Heart right ventricle (tissue), 16 donors: ENCODE measurements at regions of chr22 and their contacts with region 1.

Region 1: DNA sequence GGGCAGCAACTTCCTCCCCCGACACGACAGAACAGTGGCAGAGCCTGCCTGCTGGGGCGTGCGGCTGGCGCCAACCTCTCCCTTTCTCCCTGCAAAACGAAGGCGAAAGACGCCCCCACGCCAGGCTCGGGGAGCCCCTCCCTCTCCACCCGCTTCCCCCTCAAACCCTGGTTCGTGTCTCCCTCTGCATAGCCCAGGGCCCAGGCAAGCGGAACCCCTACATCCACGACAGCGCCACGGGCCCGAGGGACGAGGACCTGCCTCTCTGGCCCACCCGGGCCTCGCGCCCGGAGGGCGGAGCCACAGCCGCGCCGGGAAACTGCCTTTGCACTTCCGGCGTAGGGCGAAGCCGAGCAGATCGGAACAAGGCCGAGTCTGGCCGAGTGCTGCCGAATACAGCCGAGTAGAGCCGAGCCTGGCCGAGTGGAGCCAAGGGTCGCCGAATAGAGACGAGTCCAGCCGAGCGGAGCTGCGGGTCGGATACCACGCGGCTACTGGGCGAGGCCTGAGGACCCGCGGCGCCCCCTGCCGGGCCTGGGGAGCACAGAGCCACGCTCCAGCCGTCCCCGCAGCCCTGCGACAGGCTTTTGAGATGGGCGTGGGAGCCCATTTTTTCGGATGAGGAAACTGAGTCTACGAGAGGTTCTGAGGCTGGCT is 11.2 kb upstream of the C1QTNF6 start:
- DNase-seq: peak; percentile 98 to 100
- ATAC-seq: peak; percentile 92 to 96 (median 94)
- H3K4me3 ChIP-seq: peak overlapping the region; percentile 18 to 69 (median 63)
- H3K27ac ChIP-seq: peak overlapping the region; percentile 90 to 97 (median 96)
- H3K4me1 ChIP-seq: peaks cover 24 to 42% (median 39%) of the 10 kb centered on the region in 9 donors
- H3K27me3 ChIP-seq: no peaks in the 10 kb centered on the region
- CTCF ChIP-seq: peak; percentile 85 to 99 (median 97)

Region 2: DNA sequence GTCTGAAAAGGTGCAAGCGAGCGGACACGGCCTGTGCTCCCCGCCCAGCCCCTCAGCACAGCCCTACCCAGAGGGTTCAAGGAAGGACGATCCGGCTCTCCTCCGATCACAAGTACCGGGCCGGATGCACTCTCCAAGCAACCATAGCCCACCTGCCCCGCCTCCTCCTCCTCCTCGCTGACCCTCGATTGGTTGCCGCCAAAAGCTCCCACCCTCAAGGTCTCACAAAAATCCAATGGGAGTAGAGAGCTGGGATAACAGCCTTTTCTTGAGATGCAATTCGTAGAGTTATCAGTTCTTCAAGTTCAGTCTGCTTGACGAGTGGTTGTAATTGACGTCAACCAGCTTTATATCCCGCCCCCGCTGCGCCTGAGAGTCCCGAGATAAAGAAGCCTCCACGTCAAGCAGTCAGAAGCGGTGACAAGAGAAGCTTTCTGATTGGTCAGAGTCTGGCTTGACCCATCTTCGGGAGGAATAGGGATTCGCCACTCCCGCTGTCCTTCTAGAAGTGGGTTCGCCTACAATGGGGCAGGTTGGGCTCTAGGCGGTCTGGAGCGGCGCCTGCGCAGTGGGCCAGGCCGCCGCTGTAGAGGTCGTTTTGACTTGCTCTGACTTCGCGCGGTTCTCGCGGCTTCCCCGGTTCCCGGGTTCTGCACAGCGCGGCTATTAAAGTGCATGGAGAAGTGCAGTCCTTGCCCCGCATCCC is 423.1 kb before region 1 on chr22 and contains the start of gene IFT27:
- intact Hi-C with region 1: loop called in 1 of 10 experiments (anchors 2 kb)
- DNase-seq: peak; percentile 93 to 100
- ATAC-seq: peak; percentile 97 to 99 (median 98)
- H3K4me3 ChIP-seq: peak within 1 kb of the TSS; percentile 71 to 98 (median 92)
- H3K27ac ChIP-seq: peak within 1 kb of the TSS in 9 of 10 donors; percentile 83 to 92 (median 88)
- H3K4me1 ChIP-seq: peaks cover 0 to 18% (median 15%) of the 10 kb centered on the region in 9 donors
- H3K27me3 ChIP-seq: no peaks in the 10 kb centered on the region
- CTCF ChIP-seq: no peak
- total RNA-seq, gene IFT27: 20.8 to 34.4 (median 26.3) TPM

Region 3: GRCh38 chr22:37148742-37149665 is 50.2 kb before region 1 on chr22:
- intact Hi-C with region 1: no loop called
- DNase-seq: no peak
- ATAC-seq: peak in 1 of 8 donors; percentile 24
- H3K4me3 ChIP-seq: peak overlapping the region in 3 of 10 donors; percentile 4 to 53 (median 5)
- H3K27ac ChIP-seq: peak overlapping the region in 1 of 10 donors; percentile 85
- H3K4me1 ChIP-seq: peaks cover 0 to 10% (median 0%) of the 10 kb centered on the region in 9 donors
- H3K27me3 ChIP-seq: peaks cover 0 to 38% (median 16%) of the 10 kb centered on the region in 7 donors
- CTCF ChIP-seq: no peak

Region 4: DNA sequence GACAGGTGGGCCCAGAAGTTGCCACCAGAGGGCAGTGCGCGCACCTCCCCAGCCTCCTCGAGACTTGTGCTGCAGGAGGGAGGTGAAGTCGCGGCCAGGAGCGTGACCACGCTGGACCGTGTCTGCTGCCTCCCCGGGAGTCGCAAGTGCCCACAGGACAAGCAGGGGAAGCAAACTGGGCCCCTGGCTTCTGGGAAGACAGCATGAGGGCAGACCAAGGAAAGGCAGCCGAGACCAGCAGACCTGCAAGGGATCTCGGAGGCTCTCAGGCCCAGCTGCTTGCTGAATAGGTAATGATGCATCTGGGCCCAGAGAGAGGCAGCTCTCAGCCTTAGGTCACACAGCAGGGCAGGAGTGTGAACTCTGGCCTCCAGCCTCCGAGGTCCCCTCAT is 32.6 kb before region 1 on chr22:
- intact Hi-C with region 1: loop called (anchors 1 to 2 kb)
- DNase-seq: peak; percentile 85 to 90
- ATAC-seq: peak; percentile 86 to 98 (median 96)
- H3K4me3 ChIP-seq: peak overlapping the region in 5 of 10 donors; percentile 10 to 30 (median 25)
- H3K27ac ChIP-seq: peak overlapping the region in 5 of 10 donors; percentile 43 to 72 (median 55)
- H3K4me1 ChIP-seq: peaks cover 2 to 43% (median 20%) of the 10 kb centered on the region in 9 donors
- H3K27me3 ChIP-seq: peaks cover 0 to 4% (median 0%) of the 10 kb centered on the region in 7 donors
- CTCF ChIP-seq: peak; percentile 89 to 96 (median 94)